ENCODE measurements at regions of chr16 and their contacts with region 1.

Region 1: DNA sequence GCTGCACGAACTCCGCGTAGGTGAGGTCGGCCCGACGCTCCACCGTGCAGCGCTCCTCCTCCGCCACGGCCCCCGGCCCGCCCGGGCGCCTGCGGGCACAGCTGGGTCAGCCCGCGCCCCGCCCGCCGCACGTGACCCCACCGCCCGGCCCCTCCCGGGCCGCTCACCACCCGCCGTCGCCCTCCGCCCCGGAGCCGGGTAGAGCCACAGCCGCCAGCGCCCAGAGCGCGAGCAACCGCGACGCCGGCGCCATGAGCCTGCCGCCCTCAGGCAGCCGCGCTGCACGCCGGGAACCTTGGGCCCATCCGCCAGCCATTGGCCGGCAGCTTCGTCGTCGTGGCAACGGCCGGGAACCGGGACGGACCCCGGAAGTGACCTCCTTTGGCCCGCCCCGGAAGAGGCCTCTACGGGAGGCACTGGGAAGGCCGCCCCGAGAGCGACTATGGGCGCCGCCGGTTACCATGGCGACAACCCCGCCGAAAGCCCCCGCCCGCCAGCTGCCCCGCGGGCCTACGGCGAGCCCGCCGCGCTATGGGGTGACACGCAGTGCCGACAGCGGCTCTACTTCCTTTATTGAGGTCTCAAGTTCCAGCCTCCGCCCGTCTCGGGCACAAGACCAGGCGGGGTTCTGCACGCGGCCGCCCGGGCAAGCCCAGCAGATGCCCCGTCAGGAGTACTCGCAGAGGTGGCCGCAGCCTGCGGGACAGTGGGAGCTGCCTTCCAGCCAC is at the start of gene JMJD8:
- DNase-seq: peak; percentile 88 to 97 (median 91)
- ATAC-seq: peak; percentile 75
- H3K4me3 ChIP-seq: peak within 1 kb of the TSS; percentile 52
- H3K4me3 Mint-ChIP-seq: peak within 1 kb of the TSS; percentile 58 to 87 (median 76)
- H3K27ac ChIP-seq: peak within 1 kb of the TSS; percentile 78
- H3K27ac Mint-ChIP-seq: peak within 1 kb of the TSS in 6 of 9 donors; percentile 38 to 82 (median 58)
- H3K4me1 ChIP-seq: peaks cover 9 to 36% of the 10 kb centered on the region in 2 donors
- H3K4me1 Mint-ChIP-seq: peaks cover 10 to 31% (median 22%) of the 10 kb centered on the region in 7 donors
- H3K27me3 ChIP-seq: no peaks in the 10 kb centered on the region
- H3K27me3 Mint-ChIP-seq: no peaks in the 10 kb centered on the region
- total RNA-seq, gene JMJD8: 26.8 to 48.1 (median 37.2) TPM

Region 2: DNA sequence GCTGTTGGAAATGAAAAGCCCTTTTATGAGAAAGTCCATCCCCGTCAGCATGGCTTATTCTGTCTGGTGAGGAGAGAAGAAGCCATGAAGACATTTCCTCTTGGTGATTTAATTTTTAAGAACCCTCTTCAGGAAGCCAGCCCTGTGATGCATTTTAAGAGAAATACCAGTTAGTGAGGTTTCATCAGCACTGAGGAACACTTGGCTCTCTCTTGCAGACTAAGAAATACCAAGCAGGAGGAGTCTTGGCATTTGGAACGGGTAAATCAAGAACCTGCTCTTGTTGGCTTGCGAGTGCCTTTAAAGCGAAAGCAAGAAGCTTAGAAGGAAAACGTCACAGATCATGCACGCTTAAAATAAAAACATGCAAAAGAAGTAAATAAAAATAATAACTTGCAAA is 241.3 kb before region 1 on chr16:
- CTCF ChIA-PET with region 1: no interaction called
- POLR2A ChIA-PET with region 1: no interaction called
- intact Hi-C with region 1: no loop called
- DNase-seq: no peak
- ATAC-seq: no peak
- H3K4me3 ChIP-seq: no peak overlapping the region
- H3K4me3 Mint-ChIP-seq: no peak overlapping the region
- H3K27ac ChIP-seq: no peak overlapping the region
- H3K27ac Mint-ChIP-seq: no peak overlapping the region
- H3K4me1 ChIP-seq: no peaks in the 10 kb centered on the region
- H3K4me1 Mint-ChIP-seq: peaks cover 0 to 8% (median 4%) of the 10 kb centered on the region in 7 donors
- H3K27me3 ChIP-seq: no peaks in the 10 kb centered on the region
- H3K27me3 Mint-ChIP-seq: no peaks in the 10 kb centered on the region

Region 3: DNA sequence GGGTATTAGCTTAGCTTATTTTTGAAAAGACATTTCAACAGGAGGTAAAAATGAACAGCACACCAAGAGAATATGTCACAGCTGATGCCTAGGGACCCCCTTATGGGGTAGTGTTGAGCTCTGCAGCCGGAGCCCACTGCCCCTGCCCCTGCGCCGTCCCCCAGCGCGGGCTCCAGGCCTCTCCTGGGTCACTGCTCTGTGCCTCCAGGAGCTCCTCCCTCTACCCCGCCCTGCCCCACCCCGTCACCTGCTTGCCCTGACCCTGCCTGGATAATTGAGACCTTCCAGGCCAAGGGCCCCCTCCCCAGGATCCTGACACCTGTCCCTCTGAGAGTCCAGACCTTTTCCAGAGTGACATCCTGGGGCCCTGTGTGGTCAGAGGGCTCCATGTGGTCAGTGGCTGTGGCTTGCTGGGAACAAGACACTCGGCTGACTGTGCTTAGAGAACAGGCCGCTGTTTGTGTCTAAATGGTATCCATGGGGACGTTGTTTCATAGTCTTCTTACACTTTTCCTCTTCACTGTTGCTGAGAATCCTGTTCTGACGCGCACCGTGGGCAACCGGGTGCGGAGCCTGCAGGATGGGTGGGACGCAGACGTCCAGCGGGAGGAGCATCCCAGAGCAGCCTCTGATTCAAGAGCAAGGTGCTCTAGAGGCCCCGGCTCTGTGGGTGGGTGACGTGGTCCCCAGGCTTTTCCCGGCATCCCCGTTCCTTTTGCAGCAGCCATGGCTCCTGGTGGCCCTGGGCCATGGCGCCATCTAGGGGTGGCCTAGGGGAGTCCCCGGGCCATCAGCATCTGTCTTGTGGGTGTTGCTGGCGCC is 73.5 kb before region 1 on chr16:
- CTCF ChIA-PET with region 1: no interaction called
- POLR2A ChIA-PET with region 1: no interaction called
- intact Hi-C with region 1: no loop called
- DNase-seq: peak; percentile 35 to 58 (median 49)
- ATAC-seq: peak; percentile 87
- H3K4me3 ChIP-seq: no peak overlapping the region
- H3K4me3 Mint-ChIP-seq: no peak overlapping the region
- H3K27ac ChIP-seq: no peak overlapping the region
- H3K27ac Mint-ChIP-seq: peak overlapping the region in 2 of 9 donors; percentile 8 to 79
- H3K4me1 ChIP-seq: no peaks in the 10 kb centered on the region
- H3K4me1 Mint-ChIP-seq: peaks cover 3 to 21% (median 4%) of the 10 kb centered on the region in 7 donors
- H3K27me3 ChIP-seq: no peaks in the 10 kb centered on the region
- H3K27me3 Mint-ChIP-seq: no peaks in the 10 kb centered on the region

Region 4: DNA sequence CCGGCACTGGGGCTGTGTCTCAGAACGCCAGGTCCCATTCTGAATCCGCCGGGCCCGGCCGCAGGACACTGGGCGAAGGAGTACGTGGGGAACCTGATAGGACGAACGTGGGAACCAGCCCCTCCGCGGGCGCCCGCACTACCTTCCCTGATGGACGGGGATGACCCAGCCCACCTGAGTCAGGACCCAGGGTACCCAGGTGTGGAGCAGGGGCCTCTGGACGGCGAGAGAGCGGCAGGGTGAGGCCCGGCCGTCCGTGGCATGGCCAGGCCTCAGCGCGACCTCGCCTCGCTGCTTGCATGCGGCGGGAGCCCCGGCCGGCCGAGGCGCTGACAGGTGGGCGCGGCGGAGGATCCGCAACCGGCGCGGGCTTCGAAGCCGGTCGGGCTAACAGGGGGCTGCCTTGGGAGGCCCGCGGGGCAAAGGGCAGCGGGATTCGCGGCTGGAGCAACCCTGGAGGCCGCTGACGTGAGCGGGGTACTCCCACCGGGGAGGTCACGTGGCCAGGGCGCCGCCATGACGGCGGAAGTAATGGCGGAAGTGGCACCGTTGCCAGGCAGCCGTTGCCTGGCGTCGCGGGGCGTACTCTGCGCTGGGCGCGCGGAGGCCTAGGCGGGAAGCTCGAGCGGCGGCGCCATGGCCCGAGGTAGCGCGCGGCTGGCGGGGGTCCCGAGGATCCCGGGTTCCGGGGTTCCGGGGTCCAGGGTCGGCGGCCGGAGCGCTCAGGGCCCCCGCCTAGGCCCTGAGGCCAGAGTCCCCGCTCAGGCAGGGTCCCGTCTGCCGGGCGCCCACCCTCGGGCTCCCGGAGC is 35.2 kb before region 1 on chr16 and contains the start of gene WDR90:
- CTCF ChIA-PET with region 1: no interaction called
- POLR2A ChIA-PET with region 1: interaction called, 6 read pairs
- intact Hi-C with region 1: loop called in 1 of 2 experiments (anchors 1 kb)
- DNase-seq: peak; percentile 81 to 94 (median 89)
- ATAC-seq: peak; percentile 96
- H3K4me3 ChIP-seq: peak within 1 kb of the TSS; percentile 77
- H3K4me3 Mint-ChIP-seq: peak within 1 kb of the TSS; percentile 63 to 87 (median 78)
- H3K27ac ChIP-seq: peak within 1 kb of the TSS; percentile 97
- H3K27ac Mint-ChIP-seq: peak within 1 kb of the TSS in 7 of 9 donors; percentile 18 to 88 (median 77)
- H3K4me1 ChIP-seq: peaks cover 6 to 9% of the 10 kb centered on the region in 2 donors
- H3K4me1 Mint-ChIP-seq: peaks cover 4 to 26% (median 10%) of the 10 kb centered on the region in 7 donors
- H3K27me3 ChIP-seq: no peaks in the 10 kb centered on the region
- H3K27me3 Mint-ChIP-seq: no peaks in the 10 kb centered on the region
- total RNA-seq, gene WDR90: 11.7 to 70.6 (median 13.9) TPM

Region 5: GRCh38 chr16:660459-661183 is 23.6 kb before region 1 on chr16:
- CTCF ChIA-PET with region 1: interaction called, 3 read pairs
- POLR2A ChIA-PET with region 1: interaction called, 3 read pairs
- intact Hi-C with region 1: loop called in 1 of 2 experiments (anchors 2 kb)
- DNase-seq: peak in 8 of 9 donors; percentile 44 to 74 (median 59)
- ATAC-seq: peak; percentile 90
- H3K4me3 ChIP-seq: no peak overlapping the region
- H3K4me3 Mint-ChIP-seq: peak overlapping the region in 3 of 10 donors; percentile 33 to 37 (median 35)
- H3K27ac ChIP-seq: peak overlapping the region; percentile 3
- H3K27ac Mint-ChIP-seq: peak overlapping the region in 2 of 9 donors; percentile 45 to 46
- H3K4me1 ChIP-seq: peaks cover 0 to 7% of the 10 kb centered on the region in 2 donors
- H3K4me1 Mint-ChIP-seq: peaks cover 0 to 9% (median 4%) of the 10 kb centered on the region in 7 donors
- H3K27me3 ChIP-seq: no peaks in the 10 kb centered on the region
- H3K27me3 Mint-ChIP-seq: no peaks in the 10 kb centered on the region

Region 6: DNA sequence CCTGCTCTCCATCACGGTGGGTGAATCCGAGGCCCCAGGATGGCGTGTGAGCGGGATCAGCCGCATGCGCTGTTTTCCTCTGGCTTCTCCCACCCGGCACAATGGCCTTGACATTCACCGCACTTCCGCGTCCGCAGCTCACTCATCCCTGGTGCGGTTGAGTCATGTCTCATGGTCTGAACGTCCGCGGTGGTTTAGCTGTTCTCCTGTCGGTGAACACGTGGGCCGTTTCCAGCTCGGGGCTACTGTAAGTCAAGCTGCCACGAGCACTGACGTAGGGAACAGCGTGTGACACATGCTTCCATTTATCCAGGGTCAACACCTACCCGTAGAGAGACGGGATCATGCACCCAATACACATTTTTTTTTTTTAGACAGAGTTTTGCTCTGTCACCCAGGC is 453.4 kb after region 1 on chr16:
- CTCF ChIA-PET with region 1: no interaction called
- POLR2A ChIA-PET with region 1: no interaction called
- intact Hi-C with region 1: no loop called
- DNase-seq: no peak
- ATAC-seq: no peak
- H3K4me3 ChIP-seq: no peak overlapping the region
- H3K4me3 Mint-ChIP-seq: no peak overlapping the region
- H3K27ac ChIP-seq: no peak overlapping the region
- H3K27ac Mint-ChIP-seq: no peak overlapping the region
- H3K4me1 ChIP-seq: no peaks in the 10 kb centered on the region
- H3K4me1 Mint-ChIP-seq: peaks cover 0 to 5% (median 0%) of the 10 kb centered on the region in 7 donors
- H3K27me3 ChIP-seq: no peaks in the 10 kb centered on the region
- H3K27me3 Mint-ChIP-seq: peaks cover 0 to 3% (median 0%) of the 10 kb centered on the region in 5 donors

Measured in naive thymus-derived CD4-positive, alpha-beta T cell (primary cell).